Sciatic nerve (tissue), 2 donors: ENCODE measurements at regions of chr1 and their contacts with region 1.

Region 1: DNA sequence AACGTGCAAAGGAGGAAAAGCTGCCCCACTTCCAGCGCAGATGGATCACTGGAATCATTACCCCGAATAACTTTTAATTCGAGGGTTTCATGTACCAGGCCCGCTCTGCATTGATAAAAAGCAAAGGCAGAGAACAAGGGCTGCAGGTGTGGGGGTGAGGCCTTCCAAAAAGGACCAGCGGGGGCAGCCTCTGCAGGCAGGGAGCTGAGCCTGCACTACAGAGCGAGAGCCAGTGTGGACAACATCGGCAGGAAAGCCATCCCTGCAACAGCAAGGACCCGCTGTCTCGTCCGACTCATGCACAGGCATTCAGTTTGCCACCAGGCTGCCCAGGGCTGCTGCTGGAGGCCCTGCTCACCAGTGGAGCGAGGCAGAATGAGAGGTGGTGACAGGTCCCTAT is 27.1 kb upstream of the AJAP1 start:
- DNase-seq: no peak
- ATAC-seq: no peak

Region 2: DNA sequence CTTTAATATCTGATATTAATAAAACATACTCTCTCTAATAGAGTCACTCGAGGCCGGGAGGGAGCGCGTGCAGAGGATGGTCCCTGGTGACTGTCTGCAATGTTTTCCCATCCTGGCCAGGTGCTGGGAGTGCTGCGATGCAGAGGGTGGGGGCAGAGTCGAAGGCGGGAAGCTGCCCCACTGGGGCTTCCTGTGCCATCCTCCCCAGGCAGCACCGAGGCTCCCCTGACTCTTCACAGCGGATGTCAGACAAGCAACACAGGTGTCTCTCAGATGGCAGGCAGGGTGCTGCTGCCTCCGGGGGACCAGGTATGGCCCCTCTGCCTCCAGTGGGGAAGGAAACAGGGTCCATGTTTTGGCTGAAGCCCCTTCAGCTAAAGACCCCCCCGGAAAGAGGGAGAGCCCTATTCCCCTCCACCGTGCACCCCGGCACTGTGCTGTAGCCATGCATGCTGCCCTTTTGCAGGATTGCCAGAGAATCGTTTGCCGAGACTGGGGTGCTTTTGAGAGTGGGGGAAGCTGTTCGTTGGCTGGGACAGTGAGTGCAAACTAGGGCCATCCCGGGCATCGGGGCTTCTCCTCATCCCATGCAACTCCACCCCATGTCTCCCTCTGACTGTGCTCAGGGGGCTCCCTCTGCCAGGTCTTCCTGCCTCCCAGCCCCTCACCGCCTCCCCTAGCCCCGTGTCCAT is 1793.8 kb before region 1 on chr1:
- intact Hi-C with region 1: loop called (anchors 5 kb)
- DNase-seq: no peak
- ATAC-seq: no peak

Region 3: GRCh38 chr1:2875707-2876561 is 1751.4 kb before region 1 on chr1:
- intact Hi-C with region 1: no loop called
- DNase-seq: peak; percentile 67
- ATAC-seq: peak; percentile 74

Region 4: DNA sequence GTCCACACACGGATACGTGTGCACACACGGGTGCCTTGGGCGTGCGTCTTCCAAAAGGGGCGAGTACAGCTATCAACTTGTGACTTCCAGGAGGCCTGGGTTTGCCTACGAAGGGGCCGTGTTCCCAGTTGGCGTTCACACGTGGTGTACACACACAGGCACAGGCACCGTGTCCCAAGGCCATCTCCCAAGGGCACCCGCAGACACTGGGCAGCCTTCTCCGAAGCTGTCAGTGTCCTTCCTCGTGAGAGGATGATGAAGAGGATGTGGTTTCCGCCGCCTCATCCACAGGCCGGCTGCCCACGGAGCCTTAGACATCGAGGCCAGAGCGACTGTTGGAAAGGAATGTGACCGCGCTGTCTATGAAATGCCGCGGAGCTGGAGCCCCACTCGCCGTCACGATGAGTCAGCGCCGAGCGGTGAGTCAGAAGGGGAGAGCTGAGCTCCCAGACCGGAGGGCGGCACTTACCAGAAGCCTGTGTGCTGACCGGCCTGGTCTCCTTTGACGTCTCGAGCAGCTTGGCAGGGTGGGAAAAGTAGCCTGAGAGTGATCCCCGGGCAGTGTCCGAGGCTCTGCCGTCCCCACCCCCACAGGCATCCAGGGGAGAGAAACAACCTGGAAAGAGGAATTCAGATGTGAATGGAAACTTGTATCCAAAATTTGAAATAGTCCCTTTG is 1314.3 kb before region 1 on chr1:
- intact Hi-C with region 1: no loop called
- DNase-seq: peak; percentile 95
- ATAC-seq: peak; percentile 96